A673 (cell line): ENCODE measurements at regions of chr5 and their contacts with region 1.

Region 1: DNA sequence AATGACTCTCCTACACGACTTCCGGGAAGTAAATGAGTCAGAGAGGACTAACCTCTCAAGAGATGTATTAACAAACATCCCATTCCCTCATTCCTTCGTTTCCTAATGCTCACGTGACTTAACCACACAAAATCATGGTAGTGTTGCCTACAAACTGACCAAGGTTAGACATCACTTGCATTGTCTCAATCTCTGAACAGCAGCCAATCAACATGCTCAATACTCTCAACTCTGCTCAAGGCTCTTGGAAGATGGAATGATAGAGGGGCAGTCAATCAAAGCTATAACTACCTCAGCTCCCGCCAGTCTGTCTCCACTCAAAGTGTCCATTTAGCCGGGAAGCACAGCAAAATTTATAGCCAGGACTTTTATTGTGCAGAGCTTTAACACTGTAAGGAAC is 143.8 kb upstream of the PIK3R1 start:
- DNase-seq: no peak
- H3K4me3 ChIP-seq: no peak overlapping the region
- H3K27ac ChIP-seq: no peak overlapping the region
- H3K4me1 ChIP-seq: no peaks in the 10 kb centered on the region
- H3K27me3 ChIP-seq: no peaks in the 10 kb centered on the region
- CTCF ChIP-seq: no peak

Region 2: DNA sequence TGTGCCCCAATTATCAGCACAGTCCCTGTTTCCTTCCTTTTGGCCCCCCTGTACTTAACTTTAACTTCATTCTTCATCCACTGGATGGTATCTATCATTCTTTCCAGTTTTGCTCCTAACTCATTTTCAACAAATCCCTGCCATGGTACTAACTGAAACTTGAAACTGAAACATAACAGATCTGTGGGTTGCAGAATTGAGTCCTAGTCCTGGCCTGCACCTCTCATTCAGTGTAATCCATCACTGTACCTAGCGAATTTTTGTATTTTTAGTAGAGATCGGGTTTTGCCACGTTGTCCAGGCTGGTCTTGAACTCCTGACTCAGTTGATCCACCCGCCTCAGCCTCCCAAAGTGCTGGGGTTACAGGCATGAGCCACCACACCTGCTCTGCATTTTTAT is 128.6 kb after region 1 on chr5:
- CTCF ChIA-PET with region 1: no interaction called
- POLR2A ChIA-PET with region 1: interaction called, 11 read pairs
- intact Hi-C with region 1: no loop called
- DNase-seq: no peak
- H3K4me3 ChIP-seq: no peak overlapping the region
- H3K27ac ChIP-seq: no peak overlapping the region
- H3K4me1 ChIP-seq: no peaks in the 10 kb centered on the region
- H3K27me3 ChIP-seq: no peaks in the 10 kb centered on the region
- CTCF ChIP-seq: no peak